Cardiac septum (tissue), 1 donor: ENCODE measurements at regions of chr10 and their contacts with region 1.

Region 1: GRCh38 chr10:17984056-17984455 is 32.3 kb downstream of the SLC39A12 start:
- DNase-seq: no peak

Region 2: DNA sequence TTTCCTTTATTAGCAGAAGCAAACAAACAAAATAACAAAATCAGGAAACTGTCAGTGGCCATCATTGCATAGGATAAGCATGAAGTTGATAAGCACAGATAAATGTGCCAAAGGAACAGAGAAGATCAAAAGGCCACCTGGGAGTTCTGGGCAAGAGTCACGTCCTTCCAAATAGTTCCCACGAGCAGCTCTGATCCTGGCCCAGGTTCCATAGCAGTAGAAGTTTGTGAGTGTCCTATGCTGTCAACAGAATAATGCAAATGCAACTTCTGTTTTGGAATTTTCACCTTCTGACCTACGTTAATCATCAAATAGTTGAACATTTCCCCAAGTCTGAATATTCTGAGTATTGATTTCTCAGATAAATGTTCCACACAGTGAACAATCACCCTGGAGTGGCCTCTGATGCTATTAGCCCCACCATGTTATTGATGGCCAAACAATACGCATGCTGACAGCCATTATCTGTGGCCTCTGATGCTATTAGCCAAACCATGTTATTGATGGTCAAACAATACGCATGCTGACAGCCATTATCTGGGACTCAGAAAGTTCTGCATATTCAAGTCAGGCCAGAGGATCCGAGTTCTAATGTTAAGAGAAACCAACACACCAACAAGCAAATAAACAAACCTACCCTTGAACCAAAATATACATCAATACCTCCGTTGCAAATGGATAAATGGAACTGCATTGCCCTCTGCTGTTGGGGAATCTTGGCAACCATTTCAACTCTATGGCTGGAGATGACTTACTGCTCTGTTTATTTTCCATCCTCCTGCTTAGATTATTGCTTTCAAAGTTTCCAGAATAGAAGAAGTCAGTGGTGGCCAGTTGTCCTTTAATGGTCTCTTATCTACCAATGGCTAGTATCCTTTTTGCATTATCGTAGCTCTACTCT is 111.6 kb before region 1 on chr10:
- intact Hi-C with region 1: no loop called
- DNase-seq: no peak

Region 3: DNA sequence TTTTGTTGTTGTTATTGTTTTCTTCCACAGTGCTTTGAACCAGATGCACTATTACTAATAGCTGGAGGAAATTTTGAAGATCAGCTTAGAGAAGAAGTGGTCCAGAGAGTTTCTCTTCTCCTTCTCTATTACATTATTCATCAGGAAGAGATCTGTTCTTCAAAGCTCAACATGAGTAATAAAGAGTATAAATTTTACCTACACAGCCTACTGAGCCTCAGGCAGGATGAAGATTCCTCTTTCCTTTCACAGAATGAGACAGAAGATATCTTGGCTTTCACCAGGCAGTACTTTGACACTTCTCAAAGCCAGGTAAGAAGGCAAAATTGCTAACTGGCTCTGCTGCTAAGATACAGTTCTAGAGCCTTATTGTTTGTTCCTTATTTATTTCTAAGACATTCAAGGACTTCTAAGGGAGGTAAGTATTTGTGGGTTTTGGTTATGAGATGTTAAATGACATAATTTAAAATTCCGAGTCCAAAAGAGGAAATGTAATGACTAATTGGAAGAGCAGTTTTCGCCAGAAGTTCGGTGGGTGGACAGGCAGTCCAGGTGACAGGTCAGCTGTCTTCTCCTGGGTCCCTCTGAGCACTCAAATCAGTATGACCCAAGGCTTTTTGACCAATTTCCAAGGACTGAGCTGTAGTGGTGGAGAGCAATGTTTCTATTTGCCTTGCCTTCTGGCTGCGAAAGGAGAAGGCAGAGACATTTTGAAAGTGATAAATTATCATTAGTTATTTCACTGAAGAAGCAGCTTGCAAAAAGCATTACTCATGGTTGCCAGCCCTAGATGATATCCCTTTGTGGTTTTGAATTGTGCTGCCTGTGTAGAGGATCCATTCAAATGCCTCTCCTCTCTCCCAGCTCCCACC is 22.3 kb before region 1 on chr10:
- intact Hi-C with region 1: loop called (anchors 2 kb)
- DNase-seq: no peak